PC-3 (cell line): ENCODE measurements at regions of chr5 and their contacts with region 1.

Region 1: GRCh38 chr5:75584641-75585040 is 26.6 kb upstream of the ANKDD1B start:
- DNase-seq: peak; percentile 52
- ATAC-seq: 0 out of 2 replicates have a peak, but pooled peaks have one; percentile 24
- H3K4me3 ChIP-seq: no peak overlapping the region
- H3K27ac ChIP-seq: no peak overlapping the region
- H3K4me1 ChIP-seq: no peaks in the 10 kb centered on the region
- H3K27me3 ChIP-seq: no peaks in the 10 kb centered on the region
- CTCF ChIP-seq: peak; percentile 62

Region 2: DNA sequence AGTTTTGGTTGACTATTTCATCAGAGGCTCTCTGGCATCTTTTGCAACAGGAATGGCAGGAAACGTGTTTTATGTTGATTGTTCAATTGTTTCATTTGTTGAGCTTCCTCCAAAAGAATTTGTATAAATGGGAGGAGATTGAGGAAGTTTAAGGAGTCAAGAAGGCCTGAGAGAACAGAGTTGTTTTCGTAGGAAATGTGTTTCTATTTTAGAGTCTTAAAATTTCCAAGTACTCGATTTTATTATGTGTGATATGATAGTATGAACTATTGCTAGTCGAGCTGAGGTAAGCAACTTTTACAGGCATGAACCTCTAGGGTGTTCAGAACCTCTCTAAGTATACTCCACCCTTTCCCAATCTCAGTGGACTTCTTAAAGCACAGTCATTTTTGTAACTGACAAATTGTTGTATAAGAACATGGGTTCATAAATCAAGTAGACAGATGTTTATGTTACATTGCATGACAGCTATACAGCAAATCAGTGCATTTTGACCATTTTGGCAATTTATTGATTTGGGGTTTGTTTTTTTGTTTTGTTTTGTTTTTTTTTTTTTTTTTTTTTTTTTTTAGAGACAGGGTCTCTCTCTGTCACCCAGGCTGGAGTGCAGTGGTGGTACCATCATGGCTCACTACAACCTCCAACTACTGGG is 25.5 kb before region 1 on chr5:
- CTCF ChIA-PET with region 1: no interaction called
- POLR2A ChIA-PET with region 1: no interaction called
- intact Hi-C with region 1: no loop called
- DNase-seq: no peak
- ATAC-seq: no peak
- H3K4me3 ChIP-seq: no peak overlapping the region
- H3K27ac ChIP-seq: no peak overlapping the region
- H3K4me1 ChIP-seq: no peaks in the 10 kb centered on the region
- H3K27me3 ChIP-seq: no peaks in the 10 kb centered on the region
- CTCF ChIP-seq: no peak

Region 3: GRCh38 chr5:75668977-75669689 is 84.5 kb after region 1 on chr5:
- CTCF ChIA-PET with region 1: no interaction called
- POLR2A ChIA-PET with region 1: no interaction called
- intact Hi-C with region 1: loop called (anchors 5 kb)
- DNase-seq: peak; percentile 43
- ATAC-seq: peak; percentile 72
- H3K4me3 ChIP-seq: peak overlapping the region; percentile 42; the same call in 1 of the 2 replicates
- H3K27ac ChIP-seq: peak overlapping the region; percentile 36; the same call in 1 of the 2 replicates
- H3K4me1 ChIP-seq: peaks cover 16% of the 10 kb centered on the region
- H3K27me3 ChIP-seq: no peaks in the 10 kb centered on the region
- CTCF ChIP-seq: no peak

Region 4: GRCh38 chr5:75681125-75681830 is 96.6 kb after region 1 on chr5:
- CTCF ChIA-PET with region 1: no interaction called
- POLR2A ChIA-PET with region 1: no interaction called
- intact Hi-C with region 1: loop called (anchors 1 kb)
- DNase-seq: peak; percentile 57
- ATAC-seq: no peak
- H3K4me3 ChIP-seq: no peak overlapping the region
- H3K27ac ChIP-seq: no peak overlapping the region
- H3K4me1 ChIP-seq: peaks cover 6% of the 10 kb centered on the region
- H3K27me3 ChIP-seq: no peaks in the 10 kb centered on the region
- CTCF ChIP-seq: peak; percentile 66